ENCODE measurements at regions of chr1 and their contacts with region 1.

Region 1: GRCh38 chr1:247103859-247104591 is at the start of gene ZNF669:
- DNase-seq: peak; percentile 83 to 94 (median 91)
- ATAC-seq: peak; percentile 98
- H3K4me3 ChIP-seq: peak within 1 kb of the TSS; percentile 74 to 96
- H3K4me3 Mint-ChIP-seq: peak within 1 kb of the TSS; percentile 89
- H3K27ac ChIP-seq: peak within 1 kb of the TSS; percentile 62 to 85
- H3K27ac Mint-ChIP-seq: peak within 1 kb of the TSS; percentile 85
- H3K4me1 ChIP-seq: peaks cover 9% of the 10 kb centered on the region
- H3K4me1 Mint-ChIP-seq: peaks cover 21% of the 10 kb centered on the region
- H3K27me3 ChIP-seq: no peaks in the 10 kb centered on the region
- H3K27me3 Mint-ChIP-seq: peaks cover 20% of the 10 kb centered on the region
- CTCF ChIP-seq: no peak
- total RNA-seq, gene ZNF669: 15.5 to 23.2 TPM

Region 2: GRCh38 chr1:247078261-247079140 is 25.5 kb before region 1 on chr1 and contains the start of gene ZNF670:
- CTCF ChIA-PET with region 1: no interaction called
- POLR2A ChIA-PET with region 1: interaction called, 5 read pairs
- intact Hi-C with region 1: loop called in 1 of 2 experiments (anchors 1 kb)
- DNase-seq: peak; percentile 57 to 91 (median 82)
- ATAC-seq: peak; percentile 99
- H3K4me3 ChIP-seq: peak within 1 kb of the TSS; percentile 80 to 95
- H3K4me3 Mint-ChIP-seq: peak within 1 kb of the TSS; percentile 89
- H3K27ac ChIP-seq: peak within 1 kb of the TSS; percentile 37 to 51
- H3K27ac Mint-ChIP-seq: peak within 1 kb of the TSS; percentile 78
- H3K4me1 ChIP-seq: peaks cover 7% of the 10 kb centered on the region
- H3K4me1 Mint-ChIP-seq: peaks cover 34% of the 10 kb centered on the region
- H3K27me3 ChIP-seq: no peaks in the 10 kb centered on the region
- H3K27me3 Mint-ChIP-seq: no peaks in the 10 kb centered on the region
- CTCF ChIP-seq: no peak
- total RNA-seq, gene ZNF670: 0.17 TPM in 1 of 2 experiments, not detected in the other